ENCODE measurements at regions of chr15 and their contacts with region 1.

Region 1: DNA sequence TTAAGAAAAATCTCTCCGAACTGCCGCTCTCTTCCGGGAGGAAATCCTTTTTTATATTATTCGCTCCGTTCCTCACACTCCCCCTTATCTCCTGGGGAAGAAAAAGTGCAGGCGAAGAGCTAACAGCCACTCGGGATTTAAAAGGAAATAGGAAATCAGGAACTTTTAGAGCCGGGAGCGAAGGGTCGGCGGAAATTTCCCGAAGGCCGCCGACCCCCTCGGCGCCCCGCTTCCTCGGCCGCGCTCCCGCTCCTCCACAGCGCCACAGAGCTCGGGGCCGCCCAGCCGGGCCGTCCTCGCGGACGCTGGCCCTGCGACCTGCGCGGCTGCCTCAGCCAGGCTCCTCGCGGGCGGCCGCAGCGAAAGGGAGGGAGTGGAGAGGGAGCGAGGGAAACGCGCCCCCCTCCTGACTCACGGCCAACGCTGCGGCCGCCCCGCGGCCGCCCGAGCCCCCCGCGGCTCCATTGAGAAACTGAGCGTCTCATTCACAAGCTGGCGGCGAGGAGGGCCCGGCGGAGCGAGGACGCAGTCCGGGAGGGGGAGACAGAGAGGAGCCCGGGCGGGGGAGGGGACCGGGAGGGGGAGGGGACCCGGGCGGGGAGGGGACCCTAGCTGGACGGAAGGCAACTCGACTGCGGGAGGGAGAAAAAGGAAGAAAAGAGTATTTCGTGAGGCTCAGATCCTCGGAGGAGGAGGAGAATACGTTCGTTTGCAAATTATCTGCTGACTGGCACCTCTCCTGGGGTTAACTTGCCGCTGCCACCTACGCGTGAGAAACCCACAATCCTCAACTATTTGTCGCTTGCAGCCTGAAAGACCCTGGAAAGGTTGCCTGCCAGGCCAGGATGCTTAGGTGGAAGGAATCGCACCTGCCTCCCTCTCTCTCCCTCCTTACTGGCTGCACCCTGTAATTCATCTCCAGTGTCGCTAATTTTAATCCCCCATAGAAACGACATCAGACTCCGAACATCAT is at the start of gene PTPN9:
- DNase-seq: peak; percentile 76
- ATAC-seq: peak; percentile 82
- H3K4me3 ChIP-seq: peak within 1 kb of the TSS; percentile 83
- H3K27ac ChIP-seq: peak within 1 kb of the TSS; percentile 83
- H3K4me1 ChIP-seq: peaks cover under 1% of the 10 kb centered on the region; the same call in 1 of the 2 replicates
- H3K27me3 ChIP-seq: no peaks in the 10 kb centered on the region
- CTCF ChIP-seq: peak; percentile 40; the same call in 1 of the 2 replicates
- POLR2A ChIP-seq: peak; percentile 65
- RAD21 ChIP-seq: 0 out of 2 replicates have a peak, but pooled peaks have one; percentile 6
- total RNA-seq, gene PTPN9: 20.0 and 26.5 TPM in 2 replicates

Region 2: GRCh38 chr15:75508840-75509532 is 70.2 kb before region 1 on chr15:
- CTCF ChIA-PET with region 1: interaction called, 3 read pairs
- POLR2A ChIA-PET with region 1: no interaction called
- dilution Hi-C with region 1: no loop called
- in situ Hi-C with region 1: no loop called
- intact Hi-C with region 1: loop called (anchors 2 kb)
- DNase-seq: peak; percentile 65
- ATAC-seq: peak; percentile 66
- H3K4me3 ChIP-seq: no peak overlapping the region
- H3K27ac ChIP-seq: no peak overlapping the region
- H3K4me1 ChIP-seq: no peaks in the 10 kb centered on the region
- H3K27me3 ChIP-seq: no peaks in the 10 kb centered on the region
- CTCF ChIP-seq: peak; percentile 58
- POLR2A ChIP-seq: no peak
- RAD21 ChIP-seq: peak; percentile 65

Region 3: GRCh38 chr15:75532413-75533147 is 46.7 kb before region 1 on chr15:
- CTCF ChIA-PET with region 1: interaction called, 4 read pairs
- POLR2A ChIA-PET with region 1: no interaction called
- dilution Hi-C with region 1: no loop called
- in situ Hi-C with region 1: no loop called
- intact Hi-C with region 1: loop called (anchors 5 kb)
- DNase-seq: peak; percentile 88
- ATAC-seq: peak; percentile 90
- H3K4me3 ChIP-seq: no peak overlapping the region
- H3K27ac ChIP-seq: no peak overlapping the region
- H3K4me1 ChIP-seq: peaks cover 7% of the 10 kb centered on the region
- H3K27me3 ChIP-seq: no peaks in the 10 kb centered on the region
- CTCF ChIP-seq: peak; percentile 23; the same call in 1 of the 2 replicates
- POLR2A ChIP-seq: no peak
- RAD21 ChIP-seq: no peak

Region 4: GRCh38 chr15:75542386-75542797 is 36.8 kb before region 1 on chr15:
- CTCF ChIA-PET with region 1: no interaction called
- POLR2A ChIA-PET with region 1: interaction called, 14 read pairs
- dilution Hi-C with region 1: no loop called
- in situ Hi-C with region 1: no loop called
- intact Hi-C with region 1: no loop called
- DNase-seq: no peak
- ATAC-seq: no peak
- H3K4me3 ChIP-seq: no peak overlapping the region
- H3K27ac ChIP-seq: no peak overlapping the region
- H3K4me1 ChIP-seq: peaks cover 9% of the 10 kb centered on the region
- H3K27me3 ChIP-seq: no peaks in the 10 kb centered on the region
- CTCF ChIP-seq: no peak
- POLR2A ChIP-seq: no peak
- RAD21 ChIP-seq: no peak

Region 5: DNA sequence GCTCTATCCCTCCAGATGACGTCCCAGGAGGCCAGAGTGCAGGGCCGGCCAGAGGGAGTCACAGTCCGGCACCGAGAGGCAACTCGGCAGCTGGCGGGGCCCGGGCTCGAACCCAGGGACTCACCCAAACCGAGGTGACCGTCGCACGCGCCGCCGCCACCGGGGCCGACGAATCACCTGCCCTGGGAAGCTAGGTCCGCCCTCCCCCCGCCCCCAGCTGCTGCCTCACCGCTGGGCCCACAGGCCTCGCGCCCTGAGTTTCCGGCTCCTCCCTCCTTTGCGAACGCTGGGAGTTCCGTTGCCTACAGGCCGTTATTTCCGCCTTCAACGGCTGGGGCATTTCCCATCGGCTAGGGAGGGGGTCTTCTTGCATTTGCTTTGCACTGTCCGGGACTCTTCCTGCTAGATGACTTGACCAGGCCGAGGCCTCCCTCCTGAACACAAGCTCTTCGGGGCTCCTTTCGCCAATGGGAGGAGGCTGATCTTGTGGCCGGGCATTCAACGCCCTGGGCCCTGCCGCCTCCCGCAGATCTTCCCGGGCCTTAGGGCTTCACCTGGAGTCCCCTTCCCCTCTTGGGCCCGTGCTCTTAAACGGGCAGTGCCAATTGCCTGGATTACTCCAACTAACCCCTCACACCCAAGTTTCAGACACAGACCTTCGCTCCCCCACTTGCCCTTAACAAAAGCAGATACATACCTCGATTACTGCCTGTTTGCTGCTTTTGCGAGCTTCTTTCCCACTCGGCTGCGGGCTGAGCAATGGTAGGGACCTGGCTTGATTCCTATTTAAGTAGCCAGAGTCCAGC is 46.5 kb after region 1 on chr15 and contains the start of gene SNUPN:
- CTCF ChIA-PET with region 1: no interaction called
- POLR2A ChIA-PET with region 1: no interaction called
- dilution Hi-C with region 1: no loop called
- in situ Hi-C with region 1: no loop called
- intact Hi-C with region 1: loop called (anchors 5 kb)
- DNase-seq: peak; percentile 86
- ATAC-seq: peak; percentile 92
- H3K4me3 ChIP-seq: peak within 1 kb of the TSS; percentile 79
- H3K27ac ChIP-seq: peak within 1 kb of the TSS; percentile 95
- H3K4me1 ChIP-seq: peaks cover 5% of the 10 kb centered on the region
- H3K27me3 ChIP-seq: no peaks in the 10 kb centered on the region
- CTCF ChIP-seq: no peak
- POLR2A ChIP-seq: peak; percentile 25; the same call in 1 of the 2 replicates
- RAD21 ChIP-seq: no peak
- total RNA-seq, gene SNUPN: 23.8 and 28.6 TPM in 2 replicates

Region 6: GRCh38 chr15:75672646-75673425 is 93.6 kb after region 1 on chr15:
- CTCF ChIA-PET with region 1: no interaction called
- POLR2A ChIA-PET with region 1: no interaction called
- dilution Hi-C with region 1: no loop called
- in situ Hi-C with region 1: no loop called
- intact Hi-C with region 1: loop called (anchors 5 kb)
- DNase-seq: peak; percentile 91
- ATAC-seq: peak; percentile 69
- H3K4me3 ChIP-seq: no peak overlapping the region
- H3K27ac ChIP-seq: peak overlapping the region; percentile 78
- H3K4me1 ChIP-seq: peaks cover 34% of the 10 kb centered on the region
- H3K27me3 ChIP-seq: no peaks in the 10 kb centered on the region
- CTCF ChIP-seq: no peak
- POLR2A ChIP-seq: 0 out of 2 replicates have a peak, but pooled peaks have one; percentile 5
- RAD21 ChIP-seq: no peak

Measured in IMR-90 (cell line).